Tibial artery (tissue), 4 donors: ENCODE measurements at regions of chr21 and their contacts with region 1.

Region 1: GRCh38 chr21:44873356-44874239 is at the start of gene PTTG1IP:
- DNase-seq: peak; percentile 98 to 100
- H3K4me3 ChIP-seq: peak within 1 kb of the TSS; percentile 93 to 96
- H3K27ac ChIP-seq: peak within 1 kb of the TSS; percentile 95 to 97
- H3K4me1 ChIP-seq: peaks cover 0 to 54% (median 42%) of the 10 kb centered on the region in 4 donors
- H3K27me3 ChIP-seq: no peaks in the 10 kb centered on the region
- CTCF ChIP-seq: no peak

Region 2: DNA sequence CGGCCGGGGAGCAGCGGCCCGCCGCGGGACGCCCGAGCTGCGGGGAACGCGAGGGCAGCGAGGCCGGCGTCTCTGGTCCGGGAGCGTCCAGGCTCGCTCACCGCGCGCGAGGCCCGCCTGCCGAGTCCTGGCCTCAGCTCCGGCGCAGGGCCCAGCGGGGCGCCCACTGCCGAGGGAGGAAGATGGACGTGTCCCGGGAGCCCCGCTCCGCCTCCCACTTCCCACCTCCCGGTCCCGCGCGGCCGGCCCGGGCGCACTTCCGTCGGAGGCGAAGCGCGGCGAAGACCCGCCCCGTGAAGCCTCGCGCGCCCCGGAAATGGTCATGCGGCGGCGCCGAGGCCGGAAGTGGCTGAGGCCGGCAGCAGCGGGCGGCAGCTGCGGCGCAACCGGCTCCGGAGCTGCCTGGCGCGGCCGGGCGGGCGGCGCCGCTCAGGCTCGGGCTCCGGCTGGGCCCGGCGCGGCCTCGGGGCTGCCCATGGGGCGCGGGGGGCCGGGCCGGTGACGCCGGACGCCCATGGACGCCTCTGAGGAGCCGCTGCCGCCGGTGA is 861.5 kb before region 1 on chr21 and contains the start of gene TRAPPC10:
- intact Hi-C with region 1: loop called (anchors 5 kb)
- DNase-seq: peak; percentile 74 to 90
- H3K4me3 ChIP-seq: peak within 1 kb of the TSS; percentile 87 to 91
- H3K27ac ChIP-seq: peak within 1 kb of the TSS; percentile 97 to 99
- H3K4me1 ChIP-seq: peaks cover 0 to 36% (median 27%) of the 10 kb centered on the region in 4 donors
- H3K27me3 ChIP-seq: no peaks in the 10 kb centered on the region
- CTCF ChIP-seq: no peak

Region 3: GRCh38 chr21:44801468-44802395 is 71.9 kb before region 1 on chr21 and contains the start of gene UBE2G2:
- intact Hi-C with region 1: loop called (anchors 5 kb)
- DNase-seq: peak; percentile 70 to 87
- H3K4me3 ChIP-seq: peak within 1 kb of the TSS; percentile 81 to 86
- H3K27ac ChIP-seq: peak within 1 kb of the TSS; percentile 62 to 77
- H3K4me1 ChIP-seq: peaks cover 0 to 30% (median 24%) of the 10 kb centered on the region in 4 donors
- H3K27me3 ChIP-seq: no peaks in the 10 kb centered on the region
- CTCF ChIP-seq: no peak

Region 4: GRCh38 chr21:44817506-44817880 is 56.1 kb before region 1 on chr21:
- intact Hi-C with region 1: loop called (anchors 5 kb)
- DNase-seq: peak; percentile 82 to 95
- H3K4me3 ChIP-seq: peak overlapping the region; percentile 67 to 85
- H3K27ac ChIP-seq: peak overlapping the region; percentile 77 to 86
- H3K4me1 ChIP-seq: peaks cover 0 to 25% (median 20%) of the 10 kb centered on the region in 4 donors
- H3K27me3 ChIP-seq: no peaks in the 10 kb centered on the region
- CTCF ChIP-seq: no peak